Right lobe of liver (tissue), 6 donors: ENCODE measurements at regions of chr17 and their contacts with region 1.

Region 1: GRCh38 chr17:50478391-50479381 is at the start of gene RSAD1:
- DNase-seq: peak; percentile 90 to 93 (median 91)
- ATAC-seq: peak; percentile 70 to 82 (median 76)
- H3K4me3 ChIP-seq: peak within 1 kb of the TSS; percentile 65 to 69 (median 66)
- H3K27ac ChIP-seq: peak within 1 kb of the TSS; percentile 83 to 89 (median 87)
- H3K4me1 ChIP-seq: peaks cover 0 to 57% (median 19%) of the 10 kb centered on the region in 4 donors
- H3K27me3 ChIP-seq: no peaks in the 10 kb centered on the region
- CTCF ChIP-seq: peak; percentile 90 to 97 (median 97)
- POLR2A ChIP-seq: peak; percentile 95
- total RNA-seq, gene RSAD1: 17.9 to 26.6 (median 23.4) TPM

Region 2: GRCh38 chr17:50352072-50352692 is 126.5 kb before region 1 on chr17:
- intact Hi-C with region 1: loop called in 1 of 2 experiments (anchors 10 kb)
- DNase-seq: peak in 1 of 3 donors; percentile 60
- ATAC-seq: peak in 2 of 4 donors; percentile 3 to 49
- H3K4me3 ChIP-seq: no peak overlapping the region
- H3K27ac ChIP-seq: no peak overlapping the region
- H3K4me1 ChIP-seq: no peaks in the 10 kb centered on the region
- H3K27me3 ChIP-seq: no peaks in the 10 kb centered on the region
- CTCF ChIP-seq: no peak
- POLR2A ChIP-seq: no peak

Region 3: GRCh38 chr17:50425682-50426471 is 52.8 kb before region 1 on chr17 and contains the start of gene ACSF2:
- intact Hi-C with region 1: loop called in 1 of 2 experiments (anchors 5 kb)
- DNase-seq: peak; percentile 86 to 88 (median 87)
- ATAC-seq: peak; percentile 76 to 86 (median 80)
- H3K4me3 ChIP-seq: peak within 1 kb of the TSS; percentile 71 to 87 (median 78)
- H3K27ac ChIP-seq: peak within 1 kb of the TSS; percentile 62 to 71 (median 62)
- H3K4me1 ChIP-seq: peaks cover 0 to 50% (median 21%) of the 10 kb centered on the region in 4 donors
- H3K27me3 ChIP-seq: no peaks in the 10 kb centered on the region
- CTCF ChIP-seq: no peak
- POLR2A ChIP-seq: peak; percentile 77
- total RNA-seq, gene ACSF2: 25.1 to 60.9 (median 36.9) TPM